ENCODE measurements at regions of chr3 and their contacts with region 1.

Region 1: DNA sequence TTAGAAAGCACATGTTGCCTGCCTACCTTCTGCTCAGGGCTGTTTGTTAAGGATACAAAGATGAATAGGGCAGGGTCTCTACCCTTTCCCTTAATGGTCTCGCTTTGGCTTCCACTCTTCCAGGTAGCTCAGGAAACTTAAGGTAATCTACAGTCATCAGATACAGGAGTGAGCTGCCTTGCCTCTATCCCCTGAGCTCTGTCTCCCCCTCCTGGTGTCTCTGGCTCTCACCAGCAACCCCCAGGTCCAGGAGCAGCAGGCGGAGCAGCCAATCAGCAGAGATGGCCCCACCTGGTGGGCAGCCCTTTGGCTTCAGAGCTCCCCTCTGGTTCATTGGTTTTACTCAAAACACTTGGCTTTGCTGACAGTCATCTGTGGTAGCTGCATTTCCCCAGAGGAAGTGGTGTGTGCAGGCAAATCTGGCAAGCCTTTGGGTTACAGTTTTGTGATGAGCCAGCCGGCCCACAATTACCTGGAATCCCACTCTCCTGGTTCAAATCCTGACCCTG is 8.5 kb upstream of the CX3CR1 start:
- DNase-seq: peak; percentile 88
- H3K4me3 Mint-ChIP-seq: no peak overlapping the region
- H3K27ac Mint-ChIP-seq: peak overlapping the region; percentile 37
- H3K4me1 Mint-ChIP-seq: peaks cover 45% of the 10 kb centered on the region
- H3K27me3 Mint-ChIP-seq: no peaks in the 10 kb centered on the region

Region 2: DNA sequence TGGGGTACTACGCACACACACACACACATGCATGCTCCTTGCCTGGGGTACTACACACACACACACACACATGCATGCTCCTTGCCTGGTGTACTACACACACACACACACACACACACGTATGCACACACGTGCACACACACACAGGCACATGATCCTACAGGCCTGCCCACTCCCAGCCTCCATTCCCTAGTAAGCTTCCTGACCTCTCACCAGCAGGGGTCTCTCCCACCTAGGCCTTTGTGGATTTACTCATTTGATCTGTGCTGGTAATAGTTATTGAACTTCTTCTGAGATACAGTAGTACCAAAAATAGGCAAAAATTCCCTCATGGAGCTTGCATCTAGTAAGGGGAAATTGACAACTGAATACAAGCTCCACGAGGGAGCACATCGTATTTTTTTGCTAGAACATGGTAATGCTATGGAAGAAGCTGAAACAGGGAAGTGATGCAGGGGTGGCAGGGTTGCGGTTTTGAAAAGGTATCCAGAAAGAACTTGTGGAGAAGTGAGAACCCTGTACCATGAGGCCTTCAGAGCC is 161.8 kb before region 1 on chr3:
- CTCF ChIA-PET with region 1: interaction called, 13 read pairs
- POLR2A ChIA-PET with region 1: interaction called, 3 read pairs
- DNase-seq: peak; percentile 48
- H3K4me3 Mint-ChIP-seq: no peak overlapping the region
- H3K27ac Mint-ChIP-seq: no peak overlapping the region
- H3K4me1 Mint-ChIP-seq: peaks cover 22% of the 10 kb centered on the region
- H3K27me3 Mint-ChIP-seq: peaks cover 14% of the 10 kb centered on the region

Region 3: GRCh38 chr3:39180546-39181346 is 107.6 kb before region 1 on chr3:
- CTCF ChIA-PET with region 1: interaction called, 275 read pairs
- POLR2A ChIA-PET with region 1: no interaction called
- DNase-seq: peak; percentile 90
- H3K4me3 Mint-ChIP-seq: peak overlapping the region; percentile 75
- H3K27ac Mint-ChIP-seq: peak overlapping the region; percentile 57
- H3K4me1 Mint-ChIP-seq: peaks cover 49% of the 10 kb centered on the region
- H3K27me3 Mint-ChIP-seq: no peaks in the 10 kb centered on the region

Region 4: DNA sequence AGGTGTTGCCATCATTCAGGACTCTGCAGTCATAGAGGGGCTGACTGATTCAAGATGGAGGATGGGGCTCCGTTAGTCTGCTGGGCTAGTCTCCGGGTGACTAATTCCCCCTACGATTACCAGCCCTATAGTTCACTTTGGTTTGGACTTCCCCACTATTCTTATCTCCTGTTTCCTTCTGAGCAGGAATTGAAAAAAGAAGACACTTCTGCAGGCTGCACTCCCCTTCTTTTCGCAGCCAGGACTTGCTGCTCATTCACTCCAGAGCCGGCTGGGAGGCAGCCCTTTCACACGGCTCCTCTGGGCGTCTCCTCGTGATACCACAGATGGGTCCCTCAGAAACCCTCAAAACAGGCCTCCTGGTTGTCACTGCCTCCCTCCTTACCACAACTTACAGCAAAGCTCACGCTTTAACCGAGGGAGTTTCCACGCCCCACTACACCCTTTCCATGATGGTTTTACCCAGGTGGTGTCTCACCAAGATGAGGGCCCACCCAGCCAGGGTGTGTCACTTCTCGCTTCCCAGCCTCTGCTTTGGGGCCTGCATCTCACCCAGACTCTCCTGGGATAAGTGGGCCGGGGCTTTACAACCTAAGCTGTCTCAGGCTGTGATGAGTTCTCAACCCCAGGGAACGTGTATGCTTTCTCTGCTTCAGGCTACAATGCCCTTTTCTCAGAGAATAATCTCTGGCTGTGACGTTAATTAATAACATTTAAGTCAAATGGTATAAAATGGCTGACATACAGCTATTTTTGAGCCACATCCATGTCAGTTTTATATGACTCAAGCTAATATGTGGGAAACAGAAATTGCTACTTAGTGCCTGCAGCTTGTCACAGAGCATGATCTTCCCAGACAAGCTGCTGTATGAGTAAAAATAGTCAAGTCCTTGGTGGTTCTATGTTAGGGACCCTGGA is 20.5 kb before region 1 on chr3:
- CTCF ChIA-PET with region 1: interaction called, 146 read pairs
- POLR2A ChIA-PET with region 1: no interaction called
- DNase-seq: peak; percentile 82
- H3K4me3 Mint-ChIP-seq: peak overlapping the region; percentile 60
- H3K27ac Mint-ChIP-seq: peak overlapping the region; percentile 95
- H3K4me1 Mint-ChIP-seq: peaks cover 46% of the 10 kb centered on the region
- H3K27me3 Mint-ChIP-seq: peaks cover 8% of the 10 kb centered on the region

Region 5: DNA sequence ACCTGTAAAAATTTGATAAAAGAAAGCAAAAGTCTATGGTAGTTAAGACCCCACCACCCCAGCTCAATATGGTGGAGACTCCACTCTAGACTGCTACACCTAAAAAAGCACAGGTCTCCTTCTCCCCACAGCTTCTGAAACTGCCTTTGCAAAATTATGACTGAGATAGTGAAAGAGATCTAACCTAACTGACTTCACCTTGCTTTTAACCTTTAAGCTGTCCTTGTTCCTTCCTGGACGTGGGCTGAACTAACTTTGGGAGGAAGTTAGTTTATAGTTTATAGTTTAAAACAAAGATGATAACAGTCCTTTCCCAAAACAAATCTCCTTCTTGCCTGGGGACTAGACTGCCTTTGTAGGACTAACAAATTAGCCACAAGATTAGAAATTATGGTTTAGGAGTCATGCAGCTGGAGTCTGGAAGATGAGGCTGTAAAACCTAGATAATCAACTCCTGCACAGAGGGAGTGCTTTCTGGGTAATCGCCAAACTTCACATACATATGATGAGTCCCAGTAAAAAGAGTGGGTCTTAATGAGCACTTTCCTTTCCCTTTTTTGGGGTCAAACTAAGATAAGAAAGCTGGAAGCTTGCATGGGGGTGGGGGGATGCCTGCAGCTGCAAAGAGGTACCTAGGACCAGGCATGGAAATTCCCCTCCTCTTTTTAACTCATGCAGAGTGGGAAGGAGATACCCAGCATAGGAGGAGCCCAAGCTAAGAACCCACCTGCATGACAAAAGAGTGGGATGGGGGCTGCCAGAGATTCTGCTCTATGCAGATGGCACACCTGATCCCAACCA is 58.6 kb after region 1 on chr3:
- CTCF ChIA-PET with region 1: interaction called, 11 read pairs
- POLR2A ChIA-PET with region 1: no interaction called
- DNase-seq: peak; percentile 16
- H3K4me3 Mint-ChIP-seq: peak overlapping the region; percentile 8
- H3K27ac Mint-ChIP-seq: peak overlapping the region; percentile 27
- H3K4me1 Mint-ChIP-seq: peaks cover 44% of the 10 kb centered on the region
- H3K27me3 Mint-ChIP-seq: no peaks in the 10 kb centered on the region

Region 6: DNA sequence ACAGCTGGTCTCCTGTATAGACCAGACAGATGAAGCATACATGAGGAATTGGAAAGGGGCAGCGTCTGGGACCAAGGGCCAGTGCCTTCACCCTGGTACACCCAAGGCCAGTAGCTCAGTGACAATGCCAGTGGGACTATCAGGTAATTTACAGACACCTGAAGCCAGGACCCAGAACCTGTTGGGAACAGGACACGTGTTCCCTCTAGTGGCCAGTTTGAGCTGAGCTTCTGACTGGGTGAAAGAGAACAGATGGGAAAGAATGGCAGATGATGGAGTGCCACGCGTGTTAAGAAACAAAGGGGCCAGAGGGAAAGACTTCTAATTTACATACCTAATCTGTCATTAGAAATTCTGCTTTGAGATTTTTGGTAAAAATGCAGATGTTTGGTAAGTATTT is 89.7 kb after region 1 on chr3:
- CTCF ChIA-PET with region 1: interaction called, 22 read pairs
- POLR2A ChIA-PET with region 1: interaction called, 5 read pairs
- DNase-seq: peak; percentile 75
- H3K4me3 Mint-ChIP-seq: no peak overlapping the region
- H3K27ac Mint-ChIP-seq: no peak overlapping the region
- H3K4me1 Mint-ChIP-seq: peaks cover 20% of the 10 kb centered on the region
- H3K27me3 Mint-ChIP-seq: peaks cover 5% of the 10 kb centered on the region

Region 7: DNA sequence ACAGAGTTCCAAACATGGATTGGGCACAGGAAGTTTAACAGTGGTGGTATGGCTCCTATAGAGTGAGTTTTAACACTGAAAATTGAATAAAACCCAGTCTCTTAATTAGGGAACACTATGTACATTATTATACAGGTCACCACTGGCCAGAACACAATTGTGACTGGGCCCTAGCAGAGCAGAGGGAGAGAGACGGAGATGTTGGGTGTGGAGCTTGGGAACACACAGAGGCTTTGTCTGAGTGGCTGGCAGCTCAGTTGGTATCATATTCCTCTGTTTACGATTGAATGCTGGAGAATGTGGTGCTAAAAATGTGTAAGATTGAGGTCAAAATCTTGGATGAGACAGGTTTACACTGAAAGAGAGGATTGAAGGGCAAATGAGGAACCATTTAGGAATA is 172.3 kb after region 1 on chr3:
- CTCF ChIA-PET with region 1: no interaction called
- POLR2A ChIA-PET with region 1: no interaction called
- DNase-seq: no peak
- H3K4me3 Mint-ChIP-seq: no peak overlapping the region
- H3K27ac Mint-ChIP-seq: no peak overlapping the region
- H3K4me1 Mint-ChIP-seq: no peaks in the 10 kb centered on the region
- H3K27me3 Mint-ChIP-seq: peaks cover 10% of the 10 kb centered on the region

Region 8: DNA sequence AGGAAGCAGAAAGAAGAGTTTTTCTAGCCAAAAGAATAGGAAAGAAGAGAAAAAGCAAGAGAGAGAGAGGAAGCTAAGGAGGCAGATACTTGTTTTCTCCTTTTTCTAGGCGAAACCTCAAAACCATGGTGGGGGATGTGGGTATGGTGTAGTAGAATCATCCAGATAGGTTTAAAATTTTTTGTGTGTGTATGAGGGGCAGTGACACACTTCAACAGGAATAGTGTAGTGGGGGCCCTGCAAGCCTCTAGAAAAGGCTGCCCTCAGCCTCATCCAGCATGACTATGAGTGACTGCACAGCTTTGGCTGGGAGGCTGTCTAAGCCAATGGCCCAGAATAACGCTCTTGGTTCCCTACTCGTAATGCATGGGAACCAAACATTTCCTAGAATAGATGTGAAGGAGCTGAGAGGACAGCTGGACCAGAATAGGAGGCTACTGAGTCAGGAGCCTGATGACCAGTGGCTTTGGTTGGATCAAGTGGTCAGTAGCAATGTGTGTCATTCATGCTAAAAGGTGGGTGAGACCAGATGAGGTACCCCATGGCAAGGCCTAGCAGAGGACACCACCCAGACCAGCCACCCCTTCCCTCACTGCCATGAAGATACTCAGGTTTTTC is 203.5 kb after region 1 on chr3:
- CTCF ChIA-PET with region 1: no interaction called
- POLR2A ChIA-PET with region 1: no interaction called
- DNase-seq: no peak
- H3K4me3 Mint-ChIP-seq: no peak overlapping the region
- H3K27ac Mint-ChIP-seq: peak overlapping the region; percentile 10
- H3K4me1 Mint-ChIP-seq: peaks cover 29% of the 10 kb centered on the region
- H3K27me3 Mint-ChIP-seq: peaks cover 33% of the 10 kb centered on the region

Region 9: DNA sequence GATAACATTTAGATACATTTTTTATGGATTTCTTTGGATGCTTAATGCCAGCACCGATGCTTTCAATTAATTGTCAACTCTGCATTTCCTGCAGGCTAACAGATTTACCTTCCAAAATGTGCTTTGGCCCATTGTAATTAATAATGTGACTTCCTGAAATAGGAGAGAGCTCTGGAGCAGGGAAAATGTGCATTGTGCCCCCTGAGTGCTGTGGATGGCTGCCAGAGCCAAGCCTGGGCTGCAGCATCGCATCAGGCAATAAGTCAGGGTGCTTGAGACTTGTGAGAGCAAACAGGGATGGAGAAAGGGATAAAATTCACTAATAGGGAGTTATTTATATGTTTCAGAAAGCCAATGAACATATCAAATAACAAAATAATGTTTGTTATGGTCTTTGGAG is 312.9 kb after region 1 on chr3:
- CTCF ChIA-PET with region 1: no interaction called
- POLR2A ChIA-PET with region 1: no interaction called
- DNase-seq: no peak
- H3K4me3 Mint-ChIP-seq: no peak overlapping the region
- H3K27ac Mint-ChIP-seq: no peak overlapping the region
- H3K4me1 Mint-ChIP-seq: no peaks in the 10 kb centered on the region
- H3K27me3 Mint-ChIP-seq: peaks cover 16% of the 10 kb centered on the region

Measured in activated CD4-positive, alpha-beta T cell treated with anti-CD3 and anti-CD28 coated beads, Interleukin-2, amount 10 ng/mL, durations not matched to agents 7 days and 5 days (primary cell).